CD4-positive, alpha-beta T cell (primary cell): ENCODE measurements at regions of chr6 and their contacts with region 1.

Region 1: GRCh38 chr6:32642720-32643106 is 5.5 kb downstream of the HLA-DQA1 start:
- DNase-seq: no peak
- ATAC-seq: no peak
- H3K4me3 ChIP-seq: no peak overlapping the region
- H3K4me3 Mint-ChIP-seq: no peak overlapping the region
- H3K27ac ChIP-seq: no peak overlapping the region
- H3K27ac Mint-ChIP-seq: no peak overlapping the region
- H3K4me1 ChIP-seq: no peaks in the 10 kb centered on the region
- H3K4me1 Mint-ChIP-seq: peaks cover 11% of the 10 kb centered on the region
- H3K27me3 ChIP-seq: no peaks in the 10 kb centered on the region
- H3K27me3 Mint-ChIP-seq: no peaks in the 10 kb centered on the region
- CTCF ChIP-seq: no peak

Region 2: DNA sequence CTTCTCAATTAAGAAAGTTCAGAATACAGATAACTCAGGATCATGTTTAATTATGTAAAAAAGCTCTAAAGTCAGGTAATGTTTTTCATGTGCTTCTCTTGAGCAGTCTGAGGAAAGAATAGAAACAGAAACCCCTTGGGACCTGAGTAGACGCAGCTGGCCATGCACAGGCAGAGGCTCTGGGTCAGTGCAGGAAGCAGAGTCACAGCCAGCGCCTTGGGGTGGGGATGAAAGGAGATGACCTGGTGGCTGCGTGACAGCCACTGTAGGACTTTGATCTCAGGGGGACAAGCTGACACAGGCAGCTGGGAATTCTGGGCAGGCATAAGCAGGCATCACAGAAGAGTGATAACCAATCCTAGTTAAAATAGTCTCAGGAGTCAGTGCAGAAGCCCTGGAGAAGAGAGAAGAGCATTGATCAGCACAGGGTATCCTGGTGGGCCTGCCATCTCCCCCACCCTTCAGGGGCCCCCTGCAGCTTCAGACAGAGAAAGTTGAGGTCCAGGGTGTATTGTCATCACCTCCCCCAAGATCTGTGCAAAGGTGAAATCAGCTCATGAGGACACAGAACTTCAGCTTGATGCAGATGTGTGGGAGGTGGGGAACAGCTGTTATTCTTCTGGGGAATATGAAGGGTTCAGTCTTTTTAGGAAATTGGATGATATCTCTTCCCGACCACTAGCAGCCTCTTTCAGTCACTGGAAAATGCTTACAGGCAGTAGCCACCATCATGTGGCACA is 17.3 kb after region 1 on chr6:
- CTCF ChIA-PET with region 1: no interaction called
- POLR2A ChIA-PET with region 1: no interaction called
- intact Hi-C with region 1: no loop called
- DNase-seq: no peak
- ATAC-seq: no peak
- H3K4me3 ChIP-seq: no peak overlapping the region
- H3K4me3 Mint-ChIP-seq: no peak overlapping the region
- H3K27ac ChIP-seq: no peak overlapping the region
- H3K27ac Mint-ChIP-seq: no peak overlapping the region
- H3K4me1 ChIP-seq: peaks cover under 1% of the 10 kb centered on the region
- H3K4me1 Mint-ChIP-seq: peaks cover 11% of the 10 kb centered on the region
- H3K27me3 ChIP-seq: no peaks in the 10 kb centered on the region
- H3K27me3 Mint-ChIP-seq: no peaks in the 10 kb centered on the region
- CTCF ChIP-seq: no peak

Region 3: GRCh38 chr6:32744776-32745175 is 102.1 kb after region 1 on chr6:
- CTCF ChIA-PET with region 1: no interaction called
- POLR2A ChIA-PET with region 1: no interaction called
- intact Hi-C with region 1: loop called (anchors 2 kb)
- DNase-seq: no peak
- ATAC-seq: no peak
- H3K4me3 ChIP-seq: no peak overlapping the region
- H3K4me3 Mint-ChIP-seq: no peak overlapping the region
- H3K27ac ChIP-seq: no peak overlapping the region
- H3K27ac Mint-ChIP-seq: no peak overlapping the region
- H3K4me1 ChIP-seq: no peaks in the 10 kb centered on the region
- H3K4me1 Mint-ChIP-seq: no peaks in the 10 kb centered on the region
- H3K27me3 ChIP-seq: peaks cover 0 to 6% of the 10 kb centered on the region in 2 experiments
- H3K27me3 Mint-ChIP-seq: peaks cover 64% of the 10 kb centered on the region
- CTCF ChIP-seq: no peak

Region 4: GRCh38 chr6:32752580-32752979 is 109.9 kb after region 1 on chr6:
- CTCF ChIA-PET with region 1: no interaction called
- POLR2A ChIA-PET with region 1: no interaction called
- intact Hi-C with region 1: loop called in 1 of 2 experiments (anchors 2 kb)
- DNase-seq: no peak
- ATAC-seq: no peak
- H3K4me3 ChIP-seq: no peak overlapping the region
- H3K4me3 Mint-ChIP-seq: no peak overlapping the region
- H3K27ac ChIP-seq: no peak overlapping the region
- H3K27ac Mint-ChIP-seq: no peak overlapping the region
- H3K4me1 ChIP-seq: no peaks in the 10 kb centered on the region
- H3K4me1 Mint-ChIP-seq: no peaks in the 10 kb centered on the region
- H3K27me3 ChIP-seq: peaks cover 0 to 18% of the 10 kb centered on the region in 2 experiments
- H3K27me3 Mint-ChIP-seq: peaks cover 48% of the 10 kb centered on the region
- CTCF ChIP-seq: no peak